SK-N-SH (cell line): ENCODE measurements at regions of chr7 and their contacts with region 1.

Region 1: GRCh38 chr7:44065436-44066118 is at the start of gene PGAM2:
- DNase-seq: peak; percentile 72
- H3K4me3 ChIP-seq: peak within 1 kb of the TSS in 1 of 2 experiments; percentile 13; a peak in 1 of 4 replicates
- H3K27ac ChIP-seq: peak within 1 kb of the TSS in 1 of 2 experiments; percentile 18; a peak in 1 of 4 replicates
- H3K4me1 ChIP-seq: peaks cover 4 to 43% of the 10 kb centered on the region in 2 experiments
- H3K27me3 ChIP-seq: no peaks in the 10 kb centered on the region
- CTCF ChIP-seq: no peak
- EP300 ChIP-seq: no peak
- RAD21 ChIP-seq: no peak
- polyA plus RNA-seq, gene PGAM2: 0.79 and 1.5 TPM in 2 replicates

Region 2: DNA sequence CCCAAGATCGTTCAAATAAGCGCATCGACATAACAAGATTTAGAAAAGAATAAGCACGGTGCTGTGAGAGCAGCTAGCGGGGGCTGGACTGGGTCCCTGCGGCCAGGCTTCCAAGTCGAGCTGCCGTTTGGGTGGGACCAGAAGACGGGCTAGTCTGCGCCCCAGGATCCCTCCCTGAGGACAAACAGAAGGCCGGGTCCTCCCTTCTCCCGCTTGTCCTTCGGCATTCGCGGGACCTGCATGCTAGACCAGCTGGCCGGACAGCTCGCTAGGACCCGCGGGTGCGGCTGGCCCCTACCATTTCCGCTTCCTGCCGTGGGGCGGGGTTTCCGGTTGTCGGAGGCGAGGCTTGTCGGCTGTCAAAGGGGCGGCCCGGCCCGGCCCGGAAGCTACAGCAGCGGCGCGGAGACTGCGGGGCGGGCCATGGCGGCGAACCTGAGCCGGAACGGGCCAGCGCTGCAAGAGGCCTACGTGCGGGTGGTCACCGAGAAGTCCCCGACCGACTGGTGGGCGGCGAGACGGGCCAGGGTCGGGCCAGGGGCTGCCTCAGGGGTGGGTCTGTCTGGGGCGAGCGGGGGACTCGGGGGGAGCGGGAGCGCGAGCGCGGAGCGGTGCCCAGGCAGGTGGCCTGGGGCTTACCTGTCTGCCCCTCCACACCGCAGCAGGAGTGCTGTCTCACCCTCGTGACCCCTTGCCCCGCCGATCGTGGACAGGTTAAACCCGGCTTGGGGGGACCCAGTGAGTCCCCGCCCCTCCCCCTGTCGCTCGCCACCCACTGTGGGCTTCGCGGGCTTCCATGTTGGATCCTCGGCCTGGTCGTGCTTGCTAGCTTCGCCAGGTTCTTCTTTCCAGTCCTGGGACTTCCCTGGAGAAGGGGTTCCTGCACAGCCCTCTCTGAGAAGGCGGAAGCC is 21.0 kb before region 1 on chr7 and contains the start of gene DBNL:
- CTCF ChIA-PET with region 1: interaction called, 4 read pairs
- POLR2A ChIA-PET with region 1: interaction called, 11 read pairs
- DNase-seq: peak; percentile 99
- H3K4me3 ChIP-seq: peak within 1 kb of the TSS; percentile 75 to 94
- H3K27ac ChIP-seq: peak within 1 kb of the TSS; percentile 61 to 95
- H3K4me1 ChIP-seq: peaks cover 9 to 26% of the 10 kb centered on the region in 2 experiments
- H3K27me3 ChIP-seq: no peaks in the 10 kb centered on the region
- CTCF ChIP-seq: no peak
- EP300 ChIP-seq: no peak
- RAD21 ChIP-seq: no peak
- polyA plus RNA-seq, gene DBNL: 230 and 244 TPM in 2 replicates